ENCODE measurements at regions of chr13 and their contacts with region 1.

Region 1: DNA sequence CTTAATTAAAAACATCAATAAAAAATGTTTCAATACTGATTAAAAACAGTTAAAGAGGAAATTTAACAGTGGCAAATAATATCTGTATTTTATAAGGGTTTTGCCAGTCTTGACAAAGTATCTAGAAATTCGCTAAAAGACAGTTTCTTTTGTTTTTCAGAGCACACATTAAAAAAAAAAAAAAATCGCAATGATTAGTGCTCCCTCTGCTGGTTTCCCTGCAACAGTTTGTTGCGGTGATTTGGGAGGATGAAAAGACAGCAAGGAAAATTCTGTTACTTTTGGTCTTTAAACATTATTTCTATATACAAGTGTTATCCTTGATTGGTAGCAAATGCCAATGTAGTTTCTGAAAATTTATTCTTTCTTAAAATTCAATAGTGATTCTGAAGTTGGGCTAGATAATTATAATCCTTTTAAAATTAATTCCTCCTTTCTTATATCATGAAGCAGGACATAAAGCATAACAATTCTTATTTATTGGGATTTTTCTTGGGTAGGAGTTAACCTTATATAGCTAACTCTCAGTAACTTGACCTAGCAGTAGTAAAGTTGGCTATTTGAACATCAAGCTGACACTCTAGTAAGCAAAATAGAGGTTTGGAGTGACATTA is 23.1 kb upstream of the SPRY2 start:
- DNase-seq: no peak
- H3K4me3 ChIP-seq: peak overlapping the region in 1 of 4 donors; percentile 37
- H3K27ac ChIP-seq: no peak overlapping the region
- H3K4me1 ChIP-seq: peaks cover 0 to 10% of the 10 kb centered on the region in 2 donors
- H3K27me3 ChIP-seq: no peaks in the 10 kb centered on the region
- CTCF ChIP-seq: peak; percentile 57 to 90 (median 72)
- POLR2A ChIP-seq: no peak

Region 2: GRCh38 chr13:79679334-79679733 is 684.7 kb before region 1 on chr13:
- intact Hi-C with region 1: loop called (anchors 10 kb)
- DNase-seq: peak; percentile 56 to 90 (median 83)
- H3K4me3 ChIP-seq: no peak overlapping the region
- H3K27ac ChIP-seq: no peak overlapping the region
- H3K4me1 ChIP-seq: no peaks in the 10 kb centered on the region
- H3K27me3 ChIP-seq: no peaks in the 10 kb centered on the region
- CTCF ChIP-seq: peak; percentile 64 to 86 (median 80)
- POLR2A ChIP-seq: no peak

Region 3: GRCh38 chr13:79775830-79776229 is 588.2 kb before region 1 on chr13:
- intact Hi-C with region 1: loop called in 1 of 2 experiments (anchors 10 kb)
- DNase-seq: peak in 5 of 7 donors; percentile 17 to 52 (median 24)
- H3K4me3 ChIP-seq: no peak overlapping the region
- H3K27ac ChIP-seq: no peak overlapping the region
- H3K4me1 ChIP-seq: no peaks in the 10 kb centered on the region
- H3K27me3 ChIP-seq: no peaks in the 10 kb centered on the region
- CTCF ChIP-seq: peak in 5 of 6 experiments; percentile 34 to 50 (median 41)
- POLR2A ChIP-seq: no peak

Measured in adrenal gland (tissue), 19 donors.